Naive thymus-derived CD4-positive, alpha-beta T cell (primary cell): ENCODE measurements at regions of chrX and their contacts with region 1.

Region 1: DNA sequence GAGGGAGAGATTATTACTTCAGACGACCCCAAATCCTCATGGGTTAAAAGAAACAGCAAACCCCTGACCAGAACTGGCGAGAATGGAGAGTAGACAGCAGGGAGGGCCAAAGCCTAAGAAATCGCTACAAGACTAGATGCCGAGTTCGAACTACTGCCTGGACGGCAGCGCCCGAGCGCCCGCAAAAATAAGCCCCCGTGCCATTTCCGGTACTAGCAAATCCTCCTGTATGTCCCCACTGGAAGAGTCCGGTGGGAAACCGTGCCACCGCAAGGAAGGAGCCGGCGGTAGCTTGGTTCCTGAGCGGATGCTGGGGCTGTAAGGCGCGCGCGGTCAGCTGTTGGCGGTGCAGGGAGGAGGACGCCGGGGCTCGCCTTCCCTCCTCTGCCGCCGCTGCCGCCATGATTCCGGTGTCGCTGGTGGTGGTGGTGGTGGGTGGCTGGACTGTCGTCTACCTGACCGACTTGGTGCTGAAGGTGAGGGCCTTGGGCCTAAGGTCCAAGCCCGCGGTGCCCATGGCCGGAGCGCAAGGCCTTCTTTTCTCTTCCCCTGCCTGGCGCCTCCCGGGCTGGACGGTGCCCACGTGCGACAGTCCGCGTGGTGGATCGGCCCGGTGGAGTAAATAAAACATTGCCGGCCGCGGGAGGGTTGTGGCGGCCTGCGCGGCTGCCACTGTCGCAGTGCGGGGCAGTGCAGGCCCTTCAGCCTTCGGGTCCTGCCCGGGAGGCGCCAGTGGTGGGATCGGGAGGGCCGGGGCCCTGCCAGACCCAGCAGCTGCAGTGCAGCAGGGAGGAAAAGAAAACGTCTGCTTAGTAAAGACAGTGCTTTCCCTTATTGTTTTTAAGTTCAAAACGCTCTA is at the start of gene MBTPS2:
- DNase-seq: peak; percentile 51 to 82 (median 77)
- ATAC-seq: peak; percentile 97
- H3K4me3 ChIP-seq: peak within 1 kb of the TSS; percentile 83
- H3K4me3 Mint-ChIP-seq: peak within 1 kb of the TSS; percentile 82 to 96 (median 88)
- H3K27ac ChIP-seq: peak within 1 kb of the TSS; percentile 72
- H3K27ac Mint-ChIP-seq: peak within 1 kb of the TSS; percentile 83 to 95 (median 89)
- H3K4me1 ChIP-seq: peaks cover 0 to 8% of the 10 kb centered on the region in 2 donors
- H3K4me1 Mint-ChIP-seq: peaks cover 0 to 19% (median 7%) of the 10 kb centered on the region in 7 donors
- H3K27me3 ChIP-seq: no peaks in the 10 kb centered on the region
- H3K27me3 Mint-ChIP-seq: peaks cover 0 to 3% (median 0%) of the 10 kb centered on the region in 5 donors
- total RNA-seq, gene MBTPS2: 5.2 to 9.9 (median 7.2) TPM

Region 2: GRCh38 chrX:21658152-21658737 is 181.3 kb before region 1 on chrX and contains the start of gene KLHL34:
- CTCF ChIA-PET with region 1: no interaction called
- POLR2A ChIA-PET with region 1: interaction called, 3 read pairs
- intact Hi-C with region 1: loop called in 1 of 2 experiments (anchors 2 kb)
- DNase-seq: peak in 6 of 9 donors; percentile 17 to 24 (median 20)
- ATAC-seq: peak; percentile 56
- H3K4me3 ChIP-seq: peak within 1 kb of the TSS; percentile 43
- H3K4me3 Mint-ChIP-seq: peak within 1 kb of the TSS; percentile 65 to 88 (median 80)
- H3K27ac ChIP-seq: peak within 1 kb of the TSS; percentile 59
- H3K27ac Mint-ChIP-seq: peak within 1 kb of the TSS in 8 of 9 donors; percentile 70 to 89 (median 84)
- H3K4me1 ChIP-seq: no peaks in the 10 kb centered on the region
- H3K4me1 Mint-ChIP-seq: peaks cover 0 to 28% (median 4%) of the 10 kb centered on the region in 7 donors
- H3K27me3 ChIP-seq: no peaks in the 10 kb centered on the region
- H3K27me3 Mint-ChIP-seq: peaks cover 0 to 17% (median 4%) of the 10 kb centered on the region in 5 donors
- total RNA-seq, gene KLHL34: 0.41 to 5.3 (median 1.1) TPM

Region 3: GRCh38 chrX:21926527-21927278 is 87.1 kb after region 1 on chrX:
- CTCF ChIA-PET with region 1: no interaction called
- POLR2A ChIA-PET with region 1: no interaction called
- intact Hi-C with region 1: loop called in 1 of 2 experiments (anchors 10 kb)
- DNase-seq: no peak
- ATAC-seq: peak; percentile 56
- H3K4me3 ChIP-seq: no peak overlapping the region
- H3K4me3 Mint-ChIP-seq: peak overlapping the region in 1 of 10 donors; percentile 56
- H3K27ac ChIP-seq: no peak overlapping the region
- H3K27ac Mint-ChIP-seq: peak overlapping the region in 1 of 9 donors; percentile 82
- H3K4me1 ChIP-seq: no peaks in the 10 kb centered on the region
- H3K4me1 Mint-ChIP-seq: peaks cover 1 to 30% (median 10%) of the 10 kb centered on the region in 7 donors
- H3K27me3 ChIP-seq: no peaks in the 10 kb centered on the region
- H3K27me3 Mint-ChIP-seq: no peaks in the 10 kb centered on the region

Region 4: DNA sequence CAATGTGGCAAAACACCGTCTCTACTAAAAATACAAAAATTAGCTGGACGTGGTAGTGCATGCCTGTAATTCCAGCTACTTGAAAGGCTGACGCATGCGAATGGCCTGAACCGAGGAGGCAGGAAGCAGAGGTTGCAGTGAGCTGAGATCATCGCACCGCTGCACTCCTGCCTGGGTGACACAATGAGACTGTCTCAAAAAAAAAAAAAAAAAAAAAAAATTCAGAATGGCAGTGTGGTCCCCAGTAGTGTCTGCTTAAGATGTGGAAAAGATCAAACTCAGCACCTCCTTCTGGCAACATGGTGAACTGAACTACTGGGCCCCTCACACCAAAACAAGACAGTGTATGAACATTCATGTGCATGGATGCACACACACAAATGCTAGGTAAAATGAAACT is 133.2 kb after region 1 on chrX:
- CTCF ChIA-PET with region 1: no interaction called
- POLR2A ChIA-PET with region 1: no interaction called
- intact Hi-C with region 1: loop called (anchors 1 kb)
- DNase-seq: peak in 7 of 9 donors; percentile 11 to 48 (median 31)
- ATAC-seq: peak; percentile 83
- H3K4me3 ChIP-seq: no peak overlapping the region
- H3K4me3 Mint-ChIP-seq: peak overlapping the region in 9 of 10 donors; percentile 30 to 82 (median 61)
- H3K27ac ChIP-seq: no peak overlapping the region
- H3K27ac Mint-ChIP-seq: peak overlapping the region; percentile 82 to 98 (median 94)
- H3K4me1 ChIP-seq: peaks cover 10% of the 10 kb centered on the region in 2 donors
- H3K4me1 Mint-ChIP-seq: peaks cover 0 to 37% (median 26%) of the 10 kb centered on the region in 7 donors
- H3K27me3 ChIP-seq: no peaks in the 10 kb centered on the region
- H3K27me3 Mint-ChIP-seq: no peaks in the 10 kb centered on the region

Region 5: DNA sequence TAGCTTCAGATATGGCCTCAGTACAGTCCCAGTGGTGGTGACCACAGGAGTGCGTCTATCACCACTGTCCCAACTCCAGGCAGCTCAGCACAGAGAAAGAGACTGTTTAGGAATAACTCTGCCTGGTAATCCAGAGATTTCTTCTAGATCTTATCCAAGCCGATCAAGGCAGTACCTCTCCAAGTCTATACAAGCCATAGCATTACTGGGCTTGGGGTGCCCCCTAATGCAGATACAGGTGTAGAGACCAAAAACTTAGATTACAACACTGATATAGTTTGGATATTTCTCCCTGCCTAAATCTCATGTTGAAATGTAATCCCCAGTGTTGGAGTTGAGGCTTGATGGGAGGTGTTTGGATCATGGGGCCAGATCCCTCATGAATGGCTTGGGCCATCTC is 1596.0 kb after region 1 on chrX:
- CTCF ChIA-PET with region 1: no interaction called
- POLR2A ChIA-PET with region 1: no interaction called
- intact Hi-C with region 1: no loop called
- DNase-seq: no peak
- ATAC-seq: no peak
- H3K4me3 ChIP-seq: no peak overlapping the region
- H3K4me3 Mint-ChIP-seq: no peak overlapping the region
- H3K27ac ChIP-seq: no peak overlapping the region
- H3K27ac Mint-ChIP-seq: no peak overlapping the region
- H3K4me1 ChIP-seq: no peaks in the 10 kb centered on the region
- H3K4me1 Mint-ChIP-seq: no peaks in the 10 kb centered on the region
- H3K27me3 ChIP-seq: no peaks in the 10 kb centered on the region
- H3K27me3 Mint-ChIP-seq: peaks cover 0 to 3% (median 0%) of the 10 kb centered on the region in 5 donors